ENCODE measurements at regions of chr17 and their contacts with region 1.

Region 1: DNA sequence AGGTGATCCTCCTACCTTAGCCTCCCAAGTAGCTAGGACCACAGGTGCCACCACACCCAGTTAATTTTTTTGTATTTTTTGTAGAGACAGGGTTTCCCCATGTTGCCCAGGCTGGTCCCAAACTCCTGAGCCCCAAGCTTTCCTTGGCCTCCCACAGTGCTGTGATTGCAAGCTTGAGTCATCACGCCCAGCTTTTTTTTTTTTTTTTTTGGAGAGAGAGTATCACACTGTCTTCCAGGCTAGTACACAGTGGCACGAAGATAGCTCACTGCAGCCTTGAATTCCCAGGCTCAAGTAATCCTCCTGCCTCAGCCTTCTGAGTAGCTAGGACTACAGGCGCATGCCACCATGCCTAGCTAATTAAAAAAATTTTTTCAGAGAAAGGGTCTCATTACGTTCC is 27.2 kb downstream of the HEATR9 start:
- DNase-seq: no peak
- H3K4me3 ChIP-seq: no peak overlapping the region
- CTCF ChIP-seq: no peak

Region 2: GRCh38 chr17:35612924-35613521 is 228.5 kb before region 1 on chr17:
- in situ Hi-C with region 1: loop called (anchors 10 kb)
- DNase-seq: peak; percentile 48
- H3K4me3 ChIP-seq: no peak overlapping the region
- CTCF ChIP-seq: peak; percentile 78

Region 3: DNA sequence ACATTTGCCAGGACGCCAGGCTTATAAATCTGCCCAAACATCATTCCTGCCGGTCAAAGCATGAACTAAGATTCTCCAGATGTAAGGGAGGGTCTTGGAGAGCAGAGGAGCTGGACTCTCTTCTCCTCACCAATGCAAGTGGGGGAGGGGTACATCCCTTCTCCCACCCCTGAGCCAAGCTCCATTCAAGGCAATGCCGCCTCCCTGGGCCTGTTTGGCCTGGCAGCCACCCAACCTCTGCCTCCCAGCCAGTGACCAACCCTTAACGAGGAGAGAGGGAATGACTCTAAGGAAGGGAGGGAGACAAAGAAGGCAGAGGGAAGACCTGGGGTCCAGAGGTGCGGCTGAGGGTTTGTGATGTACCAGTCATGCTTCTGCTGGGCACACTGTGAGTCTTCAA is 67.0 kb before region 1 on chr17:
- in situ Hi-C with region 1: no loop called
- DNase-seq: peak; percentile 37
- H3K4me3 ChIP-seq: no peak overlapping the region
- CTCF ChIP-seq: no peak

Measured in astrocyte of the cerebellum (primary cell).